Ovary (tissue), 10 donors: ENCODE measurements at regions of chr19 and their contacts with region 1.

Region 1: DNA sequence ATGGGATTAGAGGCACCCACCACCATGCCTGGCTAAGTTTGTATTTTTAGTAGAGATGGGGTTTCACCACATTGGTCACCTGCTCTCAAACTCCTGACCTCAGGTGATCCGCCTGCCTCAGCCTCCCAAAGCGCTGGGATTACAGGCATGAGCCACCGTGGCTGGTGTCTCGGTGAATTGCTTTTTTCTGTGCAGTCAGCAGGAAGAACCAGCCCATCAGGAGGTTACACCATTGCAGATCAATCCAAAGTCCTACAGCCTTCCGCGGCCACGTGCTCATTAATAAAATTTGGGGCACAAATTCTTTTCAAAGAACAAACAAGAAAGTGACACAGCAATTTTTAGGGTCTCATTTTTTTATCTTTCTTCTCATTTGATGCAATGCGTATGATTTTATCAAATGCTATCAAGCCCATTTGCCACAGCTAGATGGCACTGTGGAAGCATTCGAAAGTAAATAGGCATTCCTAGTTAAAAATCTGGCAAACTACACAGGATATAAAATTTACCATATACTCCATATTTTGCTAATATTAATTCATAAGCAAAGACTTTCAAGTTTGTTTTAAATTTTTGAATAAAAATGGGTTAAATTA is 54.4 kb upstream of the ZNF835 start:
- DNase-seq: peak in 2 of 5 donors; percentile 36 to 37
- H3K4me3 ChIP-seq: no peak overlapping the region
- H3K27ac ChIP-seq: no peak overlapping the region
- H3K4me1 ChIP-seq: no peaks in the 10 kb centered on the region
- H3K27me3 ChIP-seq: no peaks in the 10 kb centered on the region
- CTCF ChIP-seq: peak; percentile 29 to 57 (median 43)
- EP300 ChIP-seq: no peak
- POLR2A ChIP-seq: no peak

Region 2: GRCh38 chr19:56707821-56708220 is 18.1 kb before region 1 on chr19:
- intact Hi-C with region 1: no loop called
- DNase-seq: no peak
- H3K4me3 ChIP-seq: no peak overlapping the region
- H3K27ac ChIP-seq: no peak overlapping the region
- H3K4me1 ChIP-seq: no peaks in the 10 kb centered on the region
- H3K27me3 ChIP-seq: no peaks in the 10 kb centered on the region
- CTCF ChIP-seq: no peak
- EP300 ChIP-seq: no peak
- POLR2A ChIP-seq: no peak

Region 3: DNA sequence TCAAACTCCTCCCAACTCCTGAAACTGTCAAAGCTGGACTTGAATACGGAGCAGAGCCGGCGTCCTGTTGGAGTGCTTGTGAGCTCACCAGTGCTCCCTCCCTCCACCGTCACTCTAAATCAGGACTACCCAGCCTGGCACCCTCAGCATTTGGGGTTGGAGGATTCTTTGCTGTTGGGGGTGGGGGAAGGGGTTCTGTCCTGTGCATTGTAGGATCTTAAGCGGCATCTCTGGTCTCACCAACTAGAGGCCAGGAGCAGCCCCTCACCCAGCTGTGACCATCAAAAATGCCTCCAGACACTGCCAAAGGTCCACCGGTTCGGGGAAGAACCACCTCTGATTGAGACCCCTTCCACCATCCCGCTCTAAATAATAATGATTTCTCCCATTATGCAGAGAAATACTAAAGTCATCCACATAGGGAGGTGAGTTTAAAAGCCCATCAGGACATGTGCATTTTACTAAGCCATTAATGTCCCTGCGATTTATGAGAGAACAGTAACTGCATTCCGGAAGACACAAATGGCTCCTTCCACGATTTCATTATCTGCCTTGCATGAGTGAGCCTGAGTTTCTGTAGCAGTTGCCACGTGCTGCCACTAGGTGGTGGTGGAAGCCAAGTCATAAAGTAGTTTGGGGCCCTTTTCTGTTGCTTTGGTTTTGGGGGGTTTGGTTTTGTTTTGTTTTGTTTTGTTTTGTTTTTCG is 377.8 kb after region 1 on chr19:
- intact Hi-C with region 1: loop called in 1 of 4 experiments (anchors 10 kb)
- DNase-seq: peak; percentile 49 to 76 (median 72)
- H3K4me3 ChIP-seq: no peak overlapping the region
- H3K27ac ChIP-seq: no peak overlapping the region
- H3K4me1 ChIP-seq: no peaks in the 10 kb centered on the region
- H3K27me3 ChIP-seq: no peaks in the 10 kb centered on the region
- CTCF ChIP-seq: peak; percentile 40 to 84 (median 72)
- EP300 ChIP-seq: no peak
- POLR2A ChIP-seq: no peak